ENCODE measurements at regions of chr17 and their contacts with region 1.

Region 1: GRCh38 chr17:51166197-51166986 is at the start of gene NME2:
- DNase-seq: peak; percentile 85
- ATAC-seq: peak; percentile 86
- H3K4me3 Mint-ChIP-seq: peak within 1 kb of the TSS; percentile 86
- H3K27ac Mint-ChIP-seq: peak within 1 kb of the TSS; percentile 90
- H3K4me1 Mint-ChIP-seq: peaks cover 24% of the 10 kb centered on the region
- H3K27me3 Mint-ChIP-seq: no peaks in the 10 kb centered on the region
- CTCF ChIP-seq: no peak
- total RNA-seq, gene NME2: 439 and 524 TPM in 2 replicates

Region 2: GRCh38 chr17:51153210-51154072 is 13.0 kb before region 1 on chr17 and contains the start of gene NME1:
- CTCF ChIA-PET with region 1: interaction called, 11 read pairs
- POLR2A ChIA-PET with region 1: interaction called, 51 read pairs
- intact Hi-C with region 1: loop called (anchors 1 kb)
- DNase-seq: peak; percentile 99
- ATAC-seq: peak; percentile 88
- H3K4me3 Mint-ChIP-seq: no peak within 1 kb of the TSS
- H3K27ac Mint-ChIP-seq: no peak within 1 kb of the TSS
- H3K4me1 Mint-ChIP-seq: peaks cover 7% of the 10 kb centered on the region
- H3K27me3 Mint-ChIP-seq: no peaks in the 10 kb centered on the region
- CTCF ChIP-seq: no peak
- total RNA-seq, gene NME1: 130 and 138 TPM in 2 replicates

Measured in activated B cell treated with CpG ODN at 0.5 μM for 24 hours (primary cell).